Colonic mucosa (tissue), 4 donors: ENCODE measurements at regions of chr11 and their contacts with region 1.

Region 1: DNA sequence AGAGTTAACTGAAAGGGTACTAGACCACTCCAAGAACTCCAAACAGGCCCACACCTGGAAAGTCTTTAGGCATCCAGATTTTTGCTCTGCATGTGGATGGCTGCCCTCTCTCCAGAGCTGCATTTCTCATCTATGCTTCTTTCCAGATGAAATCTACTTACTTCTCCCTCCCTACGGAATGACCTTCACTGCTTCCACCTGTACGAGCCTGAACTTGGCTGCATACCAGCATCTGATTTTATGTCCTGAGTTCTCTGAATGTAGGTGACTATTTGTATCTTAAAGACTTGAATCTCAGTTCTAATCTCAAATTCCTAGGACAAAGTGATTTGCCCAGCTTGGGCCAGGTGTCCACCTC is 13.3 kb downstream of the CELF1 start:
- DNase-seq: no peak
- H3K4me3 ChIP-seq: no peak overlapping the region
- H3K27ac ChIP-seq: no peak overlapping the region
- H3K4me1 ChIP-seq: peaks cover 15% of the 10 kb centered on the region
- H3K27me3 ChIP-seq: no peaks in the 10 kb centered on the region
- CTCF ChIP-seq: no peak

Region 2: GRCh38 chr11:47477323-47477722 is 62.3 kb before region 1 on chr11:
- intact Hi-C with region 1: loop called (anchors 10 kb)
- DNase-seq: no peak
- H3K4me3 ChIP-seq: no peak overlapping the region
- H3K27ac ChIP-seq: no peak overlapping the region
- H3K4me1 ChIP-seq: no peaks in the 10 kb centered on the region
- H3K27me3 ChIP-seq: no peaks in the 10 kb centered on the region
- CTCF ChIP-seq: no peak